PC-9 (cell line): ENCODE measurements at regions of chr7 and their contacts with region 1.

Region 1: GRCh38 chr7:103296901-103297836 is at the start of gene PMPCB:
- DNase-seq: peak; percentile 84 to 93
- H3K4me3 ChIP-seq: peak within 1 kb of the TSS; percentile 89
- H3K27ac ChIP-seq: peak within 1 kb of the TSS; percentile 45; the same call in 1 of the 2 replicates
- H3K4me1 ChIP-seq: peaks cover 16% of the 10 kb centered on the region
- H3K27me3 ChIP-seq: no peaks in the 10 kb centered on the region
- CTCF ChIP-seq: peak; percentile 97
- total RNA-seq, gene PMPCB: 72.2 and 78.1 TPM in 2 replicates

Region 2: DNA sequence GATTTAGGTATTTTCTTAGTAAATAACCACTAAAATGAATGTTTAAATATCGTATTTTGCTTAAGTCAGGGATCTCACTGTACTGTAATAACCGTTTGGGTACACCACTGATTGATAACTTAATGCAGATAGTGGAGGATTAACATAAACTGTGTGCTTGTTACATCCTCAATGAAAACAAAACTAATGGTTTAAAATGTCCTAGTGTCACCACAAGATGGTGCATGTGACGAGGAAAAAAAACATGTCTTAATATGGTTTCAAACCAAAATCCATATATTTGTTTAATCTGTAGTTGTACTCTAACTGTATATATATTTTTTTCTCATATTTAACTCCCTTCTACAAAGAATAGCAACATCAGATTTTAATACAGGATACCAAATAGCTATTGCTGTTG is 203.1 kb before region 1 on chr7:
- CTCF ChIA-PET with region 1: no interaction called
- POLR2A ChIA-PET with region 1: no interaction called
- intact Hi-C with region 1: loop called (anchors 10 kb)
- DNase-seq: no peak
- H3K4me3 ChIP-seq: no peak overlapping the region
- H3K27ac ChIP-seq: no peak overlapping the region
- H3K4me1 ChIP-seq: no peaks in the 10 kb centered on the region
- H3K27me3 ChIP-seq: no peaks in the 10 kb centered on the region
- CTCF ChIP-seq: no peak

Region 3: GRCh38 chr7:103148994-103149807 is 148.0 kb before region 1 on chr7 and contains the start of gene NAPEPLD:
- CTCF ChIA-PET with region 1: no interaction called
- POLR2A ChIA-PET with region 1: no interaction called
- intact Hi-C with region 1: loop called (anchors 2 kb)
- DNase-seq: peak; percentile 55 to 86
- H3K4me3 ChIP-seq: peak within 1 kb of the TSS; percentile 77
- H3K27ac ChIP-seq: peak within 1 kb of the TSS; percentile 82
- H3K4me1 ChIP-seq: peaks cover 35% of the 10 kb centered on the region
- H3K27me3 ChIP-seq: no peaks in the 10 kb centered on the region
- CTCF ChIP-seq: no peak
- total RNA-seq, gene NAPEPLD: 22.6 TPM in 2 replicates

Region 4: GRCh38 chr7:103307503-103308231 is 10.5 kb after region 1 on chr7:
- CTCF ChIA-PET with region 1: no interaction called
- POLR2A ChIA-PET with region 1: interaction called, 18 read pairs
- intact Hi-C with region 1: no loop called
- DNase-seq: no peak
- H3K4me3 ChIP-seq: no peak overlapping the region
- H3K27ac ChIP-seq: no peak overlapping the region; the same call in 1 of the 2 replicates
- H3K4me1 ChIP-seq: no peaks in the 10 kb centered on the region
- H3K27me3 ChIP-seq: no peaks in the 10 kb centered on the region
- CTCF ChIP-seq: no peak

Region 5: GRCh38 chr7:103344453-103345149 is 47.4 kb after region 1 on chr7 and contains the start of gene DNAJC2:
- CTCF ChIA-PET with region 1: no interaction called
- POLR2A ChIA-PET with region 1: no interaction called
- intact Hi-C with region 1: loop called (anchors 1 kb)
- DNase-seq: peak; percentile 82 to 85
- H3K4me3 ChIP-seq: peak within 1 kb of the TSS; percentile 95
- H3K27ac ChIP-seq: peak within 1 kb of the TSS; percentile 76
- H3K4me1 ChIP-seq: peaks cover 37% of the 10 kb centered on the region
- H3K27me3 ChIP-seq: no peaks in the 10 kb centered on the region
- CTCF ChIP-seq: no peak
- total RNA-seq, gene DNAJC2: 37.8 and 42.2 TPM in 2 replicates